ENCODE measurements at regions of chr4 and their contacts with region 1.

Region 1: GRCh38 chr4:163544407-163545038 is 50.0 kb downstream of the TMA16 start:
- DNase-seq: peak; percentile 51 to 70 (median 65)
- H3K4me3 ChIP-seq: no peak overlapping the region
- H3K4me3 Mint-ChIP-seq: no peak overlapping the region
- H3K27ac ChIP-seq: peak overlapping the region in 1 of 2 donors; percentile 20
- H3K27ac Mint-ChIP-seq: no peak overlapping the region
- H3K4me1 ChIP-seq: peaks cover 0 to under 1% of the 10 kb centered on the region in 2 donors
- H3K4me1 Mint-ChIP-seq: peaks cover 9% of the 10 kb centered on the region
- H3K27me3 ChIP-seq: no peaks in the 10 kb centered on the region
- H3K27me3 Mint-ChIP-seq: no peaks in the 10 kb centered on the region
- CTCF ChIP-seq: peak; percentile 92

Region 2: GRCh38 chr4:162274354-162274753 is 1270.2 kb before region 1 on chr4:
- intact Hi-C with region 1: no loop called
- DNase-seq: peak; percentile 25 to 75 (median 41)
- H3K4me3 ChIP-seq: no peak overlapping the region
- H3K4me3 Mint-ChIP-seq: no peak overlapping the region
- H3K27ac ChIP-seq: no peak overlapping the region
- H3K27ac Mint-ChIP-seq: peak overlapping the region in 4 of 7 donors; percentile 23 to 58 (median 39)
- H3K4me1 ChIP-seq: peaks cover 0 to 9% of the 10 kb centered on the region in 2 donors
- H3K4me1 Mint-ChIP-seq: peaks cover 11% of the 10 kb centered on the region
- H3K27me3 ChIP-seq: no peaks in the 10 kb centered on the region
- H3K27me3 Mint-ChIP-seq: no peaks in the 10 kb centered on the region
- CTCF ChIP-seq: no peak

Region 3: DNA sequence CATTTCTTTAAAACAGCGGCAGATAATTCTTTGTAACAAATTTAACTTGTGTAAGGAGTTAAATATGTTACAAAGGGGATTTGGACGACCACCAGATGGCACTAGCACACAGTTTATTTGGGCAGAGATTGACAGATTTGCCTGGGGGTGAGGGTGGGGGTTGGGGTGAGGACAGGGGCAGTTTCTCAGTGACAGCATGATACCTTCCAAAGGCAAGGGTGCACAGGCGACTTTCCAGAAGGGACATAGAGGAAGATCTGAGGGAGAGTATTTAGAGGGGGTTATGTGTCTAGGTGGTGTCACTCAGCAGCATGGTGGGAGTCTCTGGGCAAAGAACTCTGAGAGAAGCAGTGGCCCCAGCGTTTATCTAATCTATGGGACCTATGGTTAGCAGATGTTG is 59.6 kb before region 1 on chr4:
- intact Hi-C with region 1: loop called in 1 of 2 experiments (anchors 10 kb)
- DNase-seq: peak; percentile 33 to 60 (median 40)
- H3K4me3 ChIP-seq: no peak overlapping the region
- H3K4me3 Mint-ChIP-seq: no peak overlapping the region
- H3K27ac ChIP-seq: no peak overlapping the region
- H3K27ac Mint-ChIP-seq: no peak overlapping the region
- H3K4me1 ChIP-seq: peaks cover 40 to 53% of the 10 kb centered on the region in 2 donors
- H3K4me1 Mint-ChIP-seq: peaks cover 2% of the 10 kb centered on the region
- H3K27me3 ChIP-seq: no peaks in the 10 kb centered on the region
- H3K27me3 Mint-ChIP-seq: peaks cover 4% of the 10 kb centered on the region in 3 donors
- CTCF ChIP-seq: peak; percentile 60

Region 4: DNA sequence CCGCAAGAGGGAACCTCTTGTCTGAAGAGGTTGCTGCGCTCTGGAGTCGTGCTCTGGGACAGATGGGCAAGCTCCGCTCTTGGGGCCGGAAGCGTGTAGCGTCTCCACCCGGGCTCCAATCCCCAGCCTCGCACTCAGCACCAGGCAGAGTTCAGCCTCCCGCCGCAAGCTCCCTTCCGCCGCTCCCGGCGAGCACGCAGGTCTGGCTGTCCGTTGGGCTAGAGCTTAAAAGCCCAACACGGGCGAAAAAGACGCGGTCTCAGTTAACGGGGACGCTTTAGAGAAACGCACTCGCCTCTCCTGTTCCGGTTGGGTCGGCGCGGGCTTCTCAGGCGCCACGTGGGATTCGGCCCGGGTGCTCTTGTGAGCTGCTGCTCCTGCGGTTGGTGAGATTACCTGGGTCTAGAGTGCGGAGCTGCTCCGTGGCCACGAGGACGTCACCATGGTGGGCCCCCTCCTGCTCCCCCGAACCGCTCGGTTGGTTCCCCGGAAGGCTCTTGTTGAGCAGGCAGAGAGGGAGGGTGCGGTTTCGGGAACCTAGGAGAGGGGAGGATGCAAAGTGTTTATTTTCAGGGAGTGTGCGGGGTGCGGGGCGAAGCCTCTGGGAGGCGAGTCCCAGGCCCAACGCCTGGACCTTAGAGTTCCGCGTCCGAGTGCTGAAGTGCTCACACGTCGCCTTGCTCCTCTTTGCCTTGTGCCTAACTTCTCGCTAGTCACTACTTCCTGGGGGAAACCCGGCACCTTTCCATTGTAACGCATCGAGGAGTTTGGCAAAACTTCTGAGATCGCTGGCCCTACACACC is 50.0 kb before region 1 on chr4 and contains the start of gene TMA16:
- intact Hi-C with region 1: loop called (anchors 2 to 10 kb)
- DNase-seq: peak; percentile 78 to 81 (median 81)
- H3K4me3 ChIP-seq: peak within 1 kb of the TSS; percentile 66 to 100 (median 80)
- H3K4me3 Mint-ChIP-seq: peak within 1 kb of the TSS; percentile 100
- H3K27ac ChIP-seq: peak within 1 kb of the TSS; percentile 85 to 89
- H3K27ac Mint-ChIP-seq: peak within 1 kb of the TSS; percentile 95 to 99 (median 97)
- H3K4me1 ChIP-seq: peaks cover 23 to 40% of the 10 kb centered on the region in 2 donors
- H3K4me1 Mint-ChIP-seq: peaks cover 32% of the 10 kb centered on the region
- H3K27me3 ChIP-seq: no peaks in the 10 kb centered on the region
- H3K27me3 Mint-ChIP-seq: peaks cover 0 to 1% (median 0%) of the 10 kb centered on the region in 3 donors
- CTCF ChIP-seq: no peak
- polyA plus RNA-seq, gene TMA16: 7.7 to 8.2 (median 8.2) TPM